ENCODE measurements at regions of chr1 and their contacts with region 1.

Region 1: DNA sequence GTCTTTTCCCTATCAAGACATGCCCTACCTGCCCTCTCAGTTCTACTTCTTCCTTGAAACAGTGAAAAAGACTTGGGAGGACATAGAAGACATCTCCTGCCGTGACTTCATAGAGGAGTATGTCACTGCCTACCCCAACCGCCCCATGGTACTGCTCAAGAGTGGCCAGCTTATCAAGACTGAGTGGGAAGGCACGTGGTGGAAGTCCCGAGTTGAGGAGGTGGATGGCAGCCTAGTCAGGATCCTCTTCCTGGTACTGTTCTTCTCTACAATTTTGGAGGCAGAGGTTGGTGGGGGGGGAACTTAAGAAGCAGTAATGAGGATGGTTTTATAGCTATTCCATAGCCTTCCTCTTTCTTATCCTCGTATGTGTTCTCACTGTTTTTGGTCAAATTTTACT is 18.7 kb downstream of the SETDB1 start:
- DNase-seq: no peak
- ATAC-seq: no peak
- H3K4me3 ChIP-seq: no peak overlapping the region
- H3K27ac ChIP-seq: no peak overlapping the region
- H3K4me1 ChIP-seq: no peaks in the 10 kb centered on the region
- H3K27me3 ChIP-seq: no peaks in the 10 kb centered on the region
- CTCF ChIP-seq: no peak

Region 2: DNA sequence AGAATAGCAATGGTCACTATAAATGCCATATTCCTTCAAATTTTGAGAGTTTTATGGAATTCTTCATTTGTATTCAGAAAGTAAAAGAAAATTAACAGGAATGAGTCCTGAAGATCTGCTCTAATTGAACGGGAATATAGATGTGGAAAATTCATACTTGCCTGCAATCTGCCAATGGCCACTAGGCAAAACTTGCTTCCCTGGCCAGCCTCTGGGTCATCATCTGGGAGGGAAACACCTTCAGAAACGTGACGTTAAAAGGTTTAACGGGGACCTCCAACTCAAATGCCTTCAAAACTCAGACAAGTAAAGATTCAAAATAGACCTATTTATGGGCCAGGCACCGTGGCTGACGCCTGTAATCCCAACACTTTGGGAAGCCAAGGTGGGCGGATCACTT is 115.1 kb before region 1 on chr1:
- CTCF ChIA-PET with region 1: no interaction called
- POLR2A ChIA-PET with region 1: interaction called, 11 read pairs
- intact Hi-C with region 1: no loop called
- DNase-seq: peak; percentile 18
- ATAC-seq: no peak
- H3K4me3 ChIP-seq: no peak overlapping the region
- H3K27ac ChIP-seq: no peak overlapping the region
- H3K4me1 ChIP-seq: no peaks in the 10 kb centered on the region
- H3K27me3 ChIP-seq: no peaks in the 10 kb centered on the region
- CTCF ChIP-seq: peak; percentile 55

Region 3: DNA sequence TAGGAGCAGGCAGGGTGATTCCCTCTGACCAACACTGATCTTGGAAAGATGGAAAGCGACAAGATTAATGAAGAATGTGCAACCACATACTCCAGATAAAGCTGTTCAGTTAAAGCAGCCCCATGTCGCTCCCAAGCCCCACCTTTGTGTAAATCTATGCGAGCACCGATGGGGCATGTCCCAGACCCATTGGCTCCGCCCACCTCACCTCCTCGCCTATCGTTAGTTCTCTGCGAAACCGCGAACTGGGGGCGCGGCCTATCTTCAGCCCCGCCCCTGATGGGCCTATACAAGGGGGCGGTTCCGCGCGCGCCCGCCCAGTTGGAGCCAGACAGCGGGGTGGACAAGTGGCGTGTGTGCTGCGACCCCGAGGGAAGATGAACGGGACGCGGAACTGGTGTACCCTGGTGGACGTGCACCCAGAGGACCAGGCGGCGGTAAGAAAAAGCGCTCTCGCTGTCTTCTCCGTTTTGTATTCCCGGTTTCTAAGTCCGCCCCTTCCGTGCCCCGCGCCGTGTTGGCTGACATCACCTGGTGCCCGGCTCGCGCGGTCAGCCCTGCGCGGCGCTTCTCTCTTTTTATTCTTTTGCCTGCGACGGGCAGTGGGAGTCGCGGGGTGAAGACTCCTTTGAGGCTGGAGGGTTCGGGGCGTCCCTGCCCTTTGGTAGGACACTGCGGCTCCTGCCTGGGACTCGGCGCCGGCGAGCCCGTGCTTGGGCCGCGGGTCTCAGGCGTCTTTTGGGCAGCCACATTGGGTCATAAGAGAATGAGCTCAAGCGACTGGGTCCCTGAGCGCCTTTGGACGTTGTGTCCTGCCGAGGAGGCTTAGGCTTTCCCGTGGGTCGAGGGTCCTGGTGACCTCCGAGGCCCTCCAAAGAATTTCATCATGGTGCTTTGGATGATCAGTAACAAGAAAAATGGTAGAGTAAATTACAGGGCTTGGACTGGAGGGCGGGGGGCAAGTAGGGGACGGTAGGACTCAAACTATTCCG is 595.4 kb after region 1 on chr1 and contains the start of gene TUFT1:
- CTCF ChIA-PET with region 1: no interaction called
- POLR2A ChIA-PET with region 1: no interaction called
- intact Hi-C with region 1: no loop called
- DNase-seq: peak; percentile 97
- ATAC-seq: peak; percentile 77
- H3K4me3 ChIP-seq: peak within 1 kb of the TSS; percentile 81
- H3K27ac ChIP-seq: peak within 1 kb of the TSS; percentile 86
- H3K4me1 ChIP-seq: peaks cover 61% of the 10 kb centered on the region
- H3K27me3 ChIP-seq: no peaks in the 10 kb centered on the region
- CTCF ChIP-seq: no peak
- total RNA-seq, gene TUFT1: 33.9 and 46.9 TPM in 2 replicates